ENCODE measurements at regions of chr1 and their contacts with region 1.

Region 1: DNA sequence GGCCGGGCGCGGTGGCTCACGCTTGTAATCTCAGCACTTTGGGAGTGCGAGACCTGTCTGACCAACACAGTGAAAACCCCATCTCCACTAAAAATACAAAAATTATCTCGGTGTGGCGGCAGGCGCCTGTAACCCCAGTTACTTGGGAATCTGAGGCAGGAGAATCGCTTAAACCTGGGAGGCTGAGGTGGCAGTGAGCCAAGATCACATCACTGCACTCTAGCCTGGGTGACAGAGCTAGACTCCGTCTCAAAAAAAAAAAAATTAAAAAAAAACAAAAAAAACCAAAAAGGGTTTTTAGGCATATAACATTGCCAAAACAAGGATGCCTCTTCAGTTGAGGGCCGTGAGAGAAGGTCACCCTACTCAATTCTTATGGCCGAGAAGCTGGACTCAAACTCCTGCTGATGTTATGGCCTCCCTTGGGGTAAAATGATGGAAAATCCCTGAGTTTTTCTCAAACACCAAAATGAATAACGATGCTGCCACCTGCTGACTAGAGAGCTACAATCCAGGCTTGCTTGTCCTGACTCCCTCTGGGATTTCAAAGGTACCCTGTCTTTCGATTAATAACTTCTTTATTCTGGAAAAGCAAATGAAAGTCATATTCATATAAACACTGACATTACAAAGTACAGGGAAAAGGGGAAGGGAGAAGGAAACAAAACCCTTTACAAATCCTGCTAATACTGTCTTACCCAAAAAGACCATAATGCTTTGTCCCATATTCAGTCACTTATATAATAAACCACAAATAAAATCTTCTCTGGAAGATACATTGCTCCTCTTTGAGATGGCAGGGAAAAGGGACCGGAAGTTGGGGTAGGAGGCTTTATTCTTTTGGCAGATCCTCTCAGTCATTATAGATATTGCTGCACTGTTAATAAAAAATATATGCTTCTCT is 10.7 kb downstream of the RAB42 start:
- DNase-seq: peak in 1 of 2 donors; percentile 78
- H3K4me3 ChIP-seq: no peak overlapping the region
- H3K27ac ChIP-seq: peak overlapping the region; percentile 53 to 65
- H3K4me1 ChIP-seq: peaks cover 6 to 8% of the 10 kb centered on the region in 2 donors
- H3K27me3 ChIP-seq: no peaks in the 10 kb centered on the region
- CTCF ChIP-seq: peak; percentile 52 to 68 (median 56)

Region 2: GRCh38 chr1:28359592-28360239 is 243.1 kb before region 1 on chr1:
- intact Hi-C with region 1: loop called (anchors 2 kb)
- DNase-seq: peak in 1 of 2 donors; percentile 77
- H3K4me3 ChIP-seq: no peak overlapping the region
- H3K27ac ChIP-seq: no peak overlapping the region
- H3K4me1 ChIP-seq: no peaks in the 10 kb centered on the region
- H3K27me3 ChIP-seq: no peaks in the 10 kb centered on the region
- CTCF ChIP-seq: peak; percentile 42 to 66 (median 50)

Region 3: DNA sequence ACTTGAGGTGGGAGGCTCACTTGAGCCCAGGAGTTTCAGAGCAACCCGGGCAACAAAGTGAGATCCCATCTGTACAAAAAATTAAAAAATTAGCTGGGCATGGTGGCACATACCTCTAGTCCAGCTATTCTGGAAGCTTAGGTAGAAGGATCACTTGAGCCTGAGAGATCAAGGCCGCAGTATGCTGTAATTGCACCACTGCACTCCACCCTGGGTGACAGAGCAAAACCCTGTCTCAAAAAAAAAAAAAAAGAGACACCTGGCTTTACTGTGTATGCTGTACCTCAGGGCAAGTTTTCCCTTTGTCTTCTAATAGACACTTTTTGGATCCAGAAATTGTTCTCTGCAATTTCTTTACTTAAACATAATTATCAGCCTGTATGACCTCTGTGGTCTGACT is 120.1 kb before region 1 on chr1:
- intact Hi-C with region 1: no loop called
- DNase-seq: no peak
- H3K4me3 ChIP-seq: no peak overlapping the region
- H3K27ac ChIP-seq: no peak overlapping the region
- H3K4me1 ChIP-seq: no peaks in the 10 kb centered on the region
- H3K27me3 ChIP-seq: no peaks in the 10 kb centered on the region
- CTCF ChIP-seq: no peak

Region 4: GRCh38 chr1:28845786-28846543 is 243.2 kb after region 1 on chr1:
- intact Hi-C with region 1: no loop called
- DNase-seq: no peak
- H3K4me3 ChIP-seq: no peak overlapping the region
- H3K27ac ChIP-seq: no peak overlapping the region
- H3K4me1 ChIP-seq: no peaks in the 10 kb centered on the region
- H3K27me3 ChIP-seq: no peaks in the 10 kb centered on the region
- CTCF ChIP-seq: no peak

Measured in ascending aorta (tissue), 2 donors.